SK-N-SH (cell line): ENCODE measurements at regions of chr2 and their contacts with region 1.

Region 1: DNA sequence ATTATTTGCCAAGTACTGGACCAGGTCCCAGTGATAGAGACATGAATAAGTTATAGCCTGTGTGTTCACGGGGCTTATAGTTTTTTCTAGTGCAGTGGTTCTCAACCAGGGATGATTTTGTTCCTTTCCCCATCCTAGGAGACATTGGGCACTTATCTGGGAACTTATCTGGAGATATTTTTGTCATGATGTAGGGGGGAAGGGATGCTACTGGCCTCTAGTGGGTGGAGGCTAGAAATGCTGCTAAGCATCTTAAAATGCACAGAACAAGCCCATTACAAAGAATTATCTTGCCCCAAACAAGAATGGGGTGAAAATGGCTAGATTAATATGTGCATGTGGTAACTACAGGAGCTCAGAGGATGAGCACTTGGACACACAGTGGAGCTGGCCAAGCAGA is 75.2 kb downstream of the KLHL29 start:
- DNase-seq: no peak
- H3K4me3 ChIP-seq: no peak overlapping the region; a peak in 1 of 4 replicates
- H3K27ac ChIP-seq: no peak overlapping the region
- H3K4me1 ChIP-seq: peaks cover under 1 to 46% of the 10 kb centered on the region in 2 experiments; a peak in 2 of 4 replicates
- H3K27me3 ChIP-seq: no peaks in the 10 kb centered on the region
- CTCF ChIP-seq: peak; percentile 75
- EP300 ChIP-seq: no peak
- RAD21 ChIP-seq: peak; percentile 64

Region 2: GRCh38 chr2:23478087-23478911 is 18.1 kb after region 1 on chr2:
- CTCF ChIA-PET with region 1: interaction called, 14 read pairs
- POLR2A ChIA-PET with region 1: interaction called, 3 read pairs
- DNase-seq: no peak
- H3K4me3 ChIP-seq: no peak overlapping the region
- H3K27ac ChIP-seq: no peak overlapping the region
- H3K4me1 ChIP-seq: peaks cover 12 to 14% of the 10 kb centered on the region in 2 experiments; a peak in 2 of 4 replicates
- H3K27me3 ChIP-seq: no peaks in the 10 kb centered on the region
- CTCF ChIP-seq: no peak
- EP300 ChIP-seq: no peak
- RAD21 ChIP-seq: no peak

Region 3: DNA sequence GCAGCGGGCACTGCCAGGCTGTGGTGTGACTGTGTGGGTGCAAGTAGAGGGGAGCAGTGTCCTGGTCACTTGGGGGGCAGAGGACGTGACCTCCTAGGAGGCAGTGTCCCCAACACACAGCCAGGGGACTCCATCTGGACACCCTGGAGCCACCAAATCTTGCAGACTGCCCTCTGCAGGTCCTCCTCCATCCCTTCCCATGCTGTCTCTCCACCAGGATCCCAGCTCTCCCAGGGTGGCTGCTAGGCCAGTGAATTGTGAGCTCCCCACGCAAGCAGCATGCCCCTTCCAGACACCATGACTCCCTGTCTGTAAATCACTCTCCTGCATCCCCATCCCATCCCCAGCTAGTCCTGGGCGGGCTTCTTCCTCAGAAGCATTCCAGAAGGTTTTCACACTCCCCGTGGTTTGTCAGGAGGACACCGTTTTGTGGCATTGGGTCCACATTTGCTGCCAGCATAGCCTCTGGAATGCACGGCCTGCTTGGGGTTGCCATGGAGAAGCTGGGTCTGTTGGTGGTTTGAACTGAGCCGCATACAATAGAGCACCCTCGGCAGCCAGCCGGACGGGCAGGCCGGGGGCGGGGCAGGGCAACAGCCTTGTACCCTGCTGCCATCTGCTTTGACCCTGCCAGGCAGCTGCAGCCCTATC is 135.5 kb after region 1 on chr2:
- CTCF ChIA-PET with region 1: no interaction called
- POLR2A ChIA-PET with region 1: no interaction called
- DNase-seq: no peak
- H3K4me3 ChIP-seq: no peak overlapping the region
- H3K27ac ChIP-seq: peak overlapping the region in 1 of 2 experiments; percentile 25; a peak in 1 of 4 replicates
- H3K4me1 ChIP-seq: peaks cover 7 to 42% of the 10 kb centered on the region in 2 experiments; a peak in 3 of 4 replicates
- H3K27me3 ChIP-seq: no peaks in the 10 kb centered on the region
- CTCF ChIP-seq: no peak
- EP300 ChIP-seq: no peak
- RAD21 ChIP-seq: no peak; the same call in 1 of the 2 replicates